Activated CD4-positive, alpha-beta T cell treated with anti-CD3 and anti-CD28 coated beads for 36 hours (primary cell): ENCODE measurements at regions of chr6 and their contacts with region 1.

Region 1: GRCh38 chr6:35297601-35298481 is at the start of gene DEF6:
- DNase-seq: peak; percentile 95
- ATAC-seq: peak; percentile 82
- H3K4me3 Mint-ChIP-seq: peak within 1 kb of the TSS; percentile 89
- H3K27ac Mint-ChIP-seq: peak within 1 kb of the TSS; percentile 96
- H3K4me1 Mint-ChIP-seq: peaks cover 48% of the 10 kb centered on the region
- H3K27me3 Mint-ChIP-seq: no peaks in the 10 kb centered on the region
- total RNA-seq, gene DEF6: 74.1 to 86.6 TPM

Region 2: GRCh38 chr6:34986845-34987246 is 311.0 kb before region 1 on chr6:
- CTCF ChIA-PET with region 1: no interaction called
- POLR2A ChIA-PET with region 1: no interaction called
- intact Hi-C with region 1: no loop called
- DNase-seq: peak; percentile 82
- ATAC-seq: peak; percentile 70
- H3K4me3 Mint-ChIP-seq: no peak overlapping the region
- H3K27ac Mint-ChIP-seq: no peak overlapping the region
- H3K4me1 Mint-ChIP-seq: no peaks in the 10 kb centered on the region
- H3K27me3 Mint-ChIP-seq: no peaks in the 10 kb centered on the region

Region 3: DNA sequence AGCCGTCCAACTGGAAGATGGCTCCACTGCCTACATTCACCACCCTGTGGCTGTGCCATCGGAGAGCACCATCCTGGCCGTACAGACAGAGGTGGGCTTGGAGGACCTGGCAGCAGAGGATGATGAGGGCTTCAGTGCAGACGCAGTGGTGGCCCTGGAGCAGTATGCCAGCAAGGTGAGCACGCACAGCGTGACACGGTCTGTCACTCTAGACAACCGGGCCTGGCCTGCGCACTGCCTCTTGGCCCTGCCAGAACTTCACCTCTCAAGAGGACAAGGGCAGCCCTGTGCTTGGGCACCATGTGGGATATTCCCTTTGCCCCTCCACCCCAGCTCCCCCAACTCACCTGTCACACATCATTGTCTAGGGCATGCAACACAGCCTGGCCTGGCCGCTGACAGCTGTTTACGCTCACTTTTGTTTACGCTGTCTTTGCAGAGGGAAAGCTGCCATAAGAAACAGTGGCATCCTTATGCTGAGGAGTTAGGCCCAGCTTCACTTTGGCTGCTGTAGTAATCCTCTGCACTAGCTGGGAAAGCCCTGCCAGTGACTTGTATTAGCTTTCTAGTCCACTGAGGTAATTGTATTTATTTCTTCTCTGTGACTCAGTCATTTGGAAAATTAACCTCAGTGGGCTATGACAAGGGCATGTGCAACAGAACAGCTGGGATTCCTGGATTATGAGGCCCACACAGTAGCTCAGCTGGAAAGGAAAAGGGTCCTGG is 10.0 kb before region 1 on chr6:
- CTCF ChIA-PET with region 1: interaction called, 26 read pairs
- POLR2A ChIA-PET with region 1: no interaction called
- intact Hi-C with region 1: no loop called
- DNase-seq: no peak
- ATAC-seq: no peak
- H3K4me3 Mint-ChIP-seq: no peak overlapping the region
- H3K27ac Mint-ChIP-seq: no peak overlapping the region
- H3K4me1 Mint-ChIP-seq: no peaks in the 10 kb centered on the region
- H3K27me3 Mint-ChIP-seq: no peaks in the 10 kb centered on the region

Region 4: DNA sequence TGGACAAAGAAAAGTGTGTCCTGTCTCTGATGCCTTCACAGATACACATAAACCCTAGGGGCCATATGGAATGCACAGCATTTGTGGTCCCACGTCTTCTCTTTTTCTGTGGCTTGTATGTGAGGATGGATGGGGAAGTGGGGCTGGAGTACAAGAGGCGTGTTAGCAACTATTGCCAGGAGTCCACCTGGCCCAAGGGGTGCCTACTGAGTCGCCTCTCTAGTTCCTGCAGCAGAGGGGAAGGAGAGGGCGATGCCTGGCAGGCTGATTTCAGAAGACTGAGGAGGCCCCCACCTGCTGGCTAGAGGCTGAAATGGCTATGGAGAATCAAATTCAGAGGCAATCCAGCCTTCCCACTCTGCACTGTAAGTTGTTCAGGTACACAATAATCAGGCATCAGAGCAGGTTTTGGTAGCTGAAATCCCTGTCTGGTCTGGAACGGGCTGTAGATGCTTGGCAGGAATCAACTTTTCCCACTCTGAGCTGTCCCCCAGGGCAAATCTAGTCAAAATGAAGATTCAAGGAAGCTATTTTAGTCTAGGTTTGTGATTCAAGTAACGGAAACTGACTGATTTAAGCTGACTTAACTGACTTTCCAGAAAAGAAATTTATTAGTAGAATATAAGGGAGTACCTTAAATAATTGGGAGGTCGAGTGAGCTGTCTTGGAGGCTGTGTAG is 29.6 kb after region 1 on chr6:
- CTCF ChIA-PET with region 1: interaction called, 277 read pairs
- POLR2A ChIA-PET with region 1: interaction called, 7 read pairs
- intact Hi-C with region 1: loop called (anchors 1 kb)
- DNase-seq: peak; percentile 89
- ATAC-seq: peak; percentile 96
- H3K4me3 Mint-ChIP-seq: no peak overlapping the region
- H3K27ac Mint-ChIP-seq: peak overlapping the region; percentile 73
- H3K4me1 Mint-ChIP-seq: peaks cover 19% of the 10 kb centered on the region
- H3K27me3 Mint-ChIP-seq: no peaks in the 10 kb centered on the region

Region 5: DNA sequence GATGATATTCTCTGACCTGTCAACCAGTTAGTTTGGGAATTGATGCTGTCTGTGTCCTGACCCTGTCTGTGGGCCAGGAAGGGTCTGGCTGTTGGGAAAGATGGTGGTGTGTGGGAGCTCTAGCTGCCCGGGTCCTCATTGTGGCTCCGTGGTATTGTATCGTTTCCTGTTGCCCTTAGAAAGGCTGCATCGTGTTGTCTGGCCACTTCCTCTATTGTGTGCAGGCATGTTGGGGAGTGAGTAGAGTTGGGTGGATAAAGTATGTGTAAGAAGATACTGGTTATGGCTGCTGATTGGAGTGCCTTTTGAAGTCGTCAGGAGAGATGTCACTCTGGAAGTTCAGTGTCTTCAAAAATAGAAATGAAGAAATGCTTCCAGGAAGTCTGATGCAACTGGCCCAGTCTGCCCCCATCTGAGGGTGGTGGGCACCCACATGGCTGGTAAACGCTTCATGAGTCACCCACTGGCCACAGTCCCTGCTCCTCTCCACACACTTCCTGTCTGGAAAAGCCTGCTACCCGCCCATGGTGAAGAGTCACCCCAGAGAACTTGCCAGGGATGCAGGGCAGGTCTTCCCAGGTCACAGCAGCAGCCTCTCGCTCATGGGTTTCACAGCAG is 72.4 kb after region 1 on chr6:
- CTCF ChIA-PET with region 1: interaction called, 5 read pairs
- POLR2A ChIA-PET with region 1: no interaction called
- intact Hi-C with region 1: loop called in 1 of 2 experiments (anchors 1 kb)
- DNase-seq: peak; percentile 59
- ATAC-seq: peak; percentile 62
- H3K4me3 Mint-ChIP-seq: peak overlapping the region; percentile 41
- H3K27ac Mint-ChIP-seq: peak overlapping the region; percentile 96
- H3K4me1 Mint-ChIP-seq: peaks cover 63% of the 10 kb centered on the region
- H3K27me3 Mint-ChIP-seq: no peaks in the 10 kb centered on the region

Region 6: DNA sequence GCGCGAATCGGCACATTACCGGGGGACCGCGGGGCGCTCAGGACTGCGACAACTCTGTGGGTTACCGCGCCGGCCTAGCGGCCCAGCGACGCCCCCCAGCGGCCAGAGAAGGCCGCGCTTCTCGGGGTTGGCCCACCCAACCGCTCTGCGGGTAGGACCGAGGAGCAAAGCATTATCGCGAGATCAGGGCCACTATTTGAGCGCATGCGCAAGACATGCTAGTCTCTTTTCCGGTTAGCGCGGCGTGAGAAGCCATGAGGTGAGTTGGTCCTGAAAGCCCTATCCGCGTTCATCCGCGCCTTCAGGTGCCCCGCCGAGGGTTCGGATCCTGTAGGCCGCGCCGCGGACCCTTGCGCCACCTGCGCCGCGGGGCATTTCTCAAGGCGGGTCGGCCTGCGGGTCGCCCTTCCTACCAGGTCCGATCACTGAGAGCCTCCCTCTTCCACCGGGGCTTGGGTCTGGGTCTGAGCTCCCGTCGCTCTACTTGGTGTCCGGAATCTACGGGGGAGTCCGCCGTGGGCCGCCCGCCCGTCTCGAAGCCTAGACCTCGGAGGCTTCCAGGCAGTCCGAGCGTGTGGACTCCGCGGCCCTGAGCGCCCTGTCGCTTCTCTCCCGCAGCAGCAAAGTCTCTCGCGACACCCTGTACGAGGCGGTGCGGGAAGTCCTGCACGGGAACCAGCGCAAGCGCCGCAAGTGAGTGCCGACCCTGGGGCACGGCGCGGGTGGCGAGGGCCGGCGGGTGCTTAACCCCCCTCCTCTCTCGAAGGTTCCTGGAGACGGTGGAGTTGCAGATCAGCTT is 170.5 kb after region 1 on chr6 and contains the start of gene RPL10A:
- CTCF ChIA-PET with region 1: interaction called, 7 read pairs
- POLR2A ChIA-PET with region 1: interaction called, 5 read pairs
- intact Hi-C with region 1: loop called (anchors 1 kb)
- DNase-seq: peak; percentile 97
- ATAC-seq: peak; percentile 87
- H3K4me3 Mint-ChIP-seq: peak within 1 kb of the TSS; percentile 93
- H3K27ac Mint-ChIP-seq: peak within 1 kb of the TSS; percentile 98
- H3K4me1 Mint-ChIP-seq: peaks cover 43% of the 10 kb centered on the region
- H3K27me3 Mint-ChIP-seq: no peaks in the 10 kb centered on the region
- total RNA-seq, gene RPL10A: 1,952 to 2,334 TPM

Region 7: DNA sequence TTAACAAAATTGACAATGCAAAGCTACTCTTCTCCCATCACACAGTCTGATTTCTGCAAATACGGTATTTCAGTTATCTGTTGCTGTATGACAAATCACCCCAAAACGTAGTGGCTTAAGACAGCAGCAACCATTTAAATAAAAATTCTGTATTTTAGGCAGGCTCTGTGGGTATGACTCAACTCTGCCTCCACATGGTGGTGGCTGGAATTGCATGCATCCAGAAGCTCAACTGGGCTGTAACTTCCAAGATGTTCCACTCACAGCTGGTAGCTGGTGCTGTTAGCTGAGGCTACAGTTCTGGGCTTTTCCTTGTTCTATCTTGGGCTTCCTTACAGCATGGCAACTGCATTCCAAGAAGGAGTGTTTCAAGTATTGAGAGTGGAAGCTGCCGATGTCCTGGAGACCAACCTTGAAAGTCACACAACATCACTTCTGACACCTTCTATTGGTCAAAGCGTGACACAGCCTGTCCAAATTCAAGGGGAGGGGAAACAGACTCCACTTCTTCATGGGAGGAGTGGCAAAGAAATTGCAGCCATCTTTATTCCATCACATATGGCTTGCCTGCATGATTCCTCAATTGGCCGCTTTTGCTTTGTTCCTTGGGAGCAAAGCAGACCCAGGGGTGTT is 254.6 kb after region 1 on chr6:
- CTCF ChIA-PET with region 1: interaction called, 5 read pairs
- POLR2A ChIA-PET with region 1: no interaction called
- intact Hi-C with region 1: loop called in 1 of 2 experiments (anchors 1 kb)
- DNase-seq: peak; percentile 80
- ATAC-seq: peak; percentile 60
- H3K4me3 Mint-ChIP-seq: no peak overlapping the region
- H3K27ac Mint-ChIP-seq: no peak overlapping the region
- H3K4me1 Mint-ChIP-seq: no peaks in the 10 kb centered on the region
- H3K27me3 Mint-ChIP-seq: no peaks in the 10 kb centered on the region

Region 8: DNA sequence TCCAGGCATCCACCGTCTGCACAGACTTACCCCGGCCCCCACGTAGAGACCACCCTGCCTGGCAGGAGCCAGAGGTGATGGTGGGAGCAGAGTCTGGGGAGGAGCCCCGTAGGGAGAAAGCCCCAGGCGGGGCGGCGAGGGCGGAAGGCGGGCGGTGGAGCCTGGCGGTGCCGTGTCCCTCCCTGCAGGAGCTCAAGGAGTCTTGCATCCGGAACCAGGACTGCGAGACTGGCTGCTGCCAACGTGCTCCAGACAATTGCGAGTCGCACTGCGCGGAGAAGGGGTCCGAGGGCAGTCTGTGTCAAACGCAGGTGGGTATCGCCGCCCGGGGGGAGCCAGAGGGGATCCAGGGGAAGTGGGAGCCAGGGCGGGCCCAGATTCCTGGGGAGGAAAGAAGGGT is 489.0 kb after region 1 on chr6:
- CTCF ChIA-PET with region 1: no interaction called
- POLR2A ChIA-PET with region 1: no interaction called
- intact Hi-C with region 1: no loop called
- DNase-seq: no peak
- ATAC-seq: no peak
- H3K4me3 Mint-ChIP-seq: no peak overlapping the region
- H3K27ac Mint-ChIP-seq: no peak overlapping the region
- H3K4me1 Mint-ChIP-seq: no peaks in the 10 kb centered on the region
- H3K27me3 Mint-ChIP-seq: peaks cover 34% of the 10 kb centered on the region